Mammary epithelial cell (primary cell): ENCODE measurements at regions of chr17 and their contacts with region 1.

Region 1: GRCh38 chr17:31802502-31802901 is 56.5 kb downstream of the COPRS start:
- DNase-seq: no peak
- H3K4me3 ChIP-seq: no peak overlapping the region
- H3K27ac ChIP-seq: no peak overlapping the region
- H3K4me1 ChIP-seq: no peaks in the 10 kb centered on the region
- H3K27me3 ChIP-seq: no peaks in the 10 kb centered on the region
- CTCF ChIP-seq: no peak

Region 2: GRCh38 chr17:31696184-31696602 is 106.3 kb before region 1 on chr17:
- CTCF ChIA-PET with region 1: no interaction called
- dilution Hi-C with region 1: loop called (anchors 5 kb)
- in situ Hi-C with region 1: no loop called
- intact Hi-C with region 1: no loop called
- DNase-seq: no peak
- H3K4me3 ChIP-seq: no peak overlapping the region
- H3K27ac ChIP-seq: no peak overlapping the region
- H3K4me1 ChIP-seq: peaks cover 5% of the 10 kb centered on the region
- H3K27me3 ChIP-seq: no peaks in the 10 kb centered on the region
- CTCF ChIP-seq: no peak

Region 3: GRCh38 chr17:31754239-31754945 is 48.1 kb before region 1 on chr17:
- CTCF ChIA-PET with region 1: no interaction called
- dilution Hi-C with region 1: loop called (anchors 5 kb)
- in situ Hi-C with region 1: no loop called
- intact Hi-C with region 1: no loop called
- DNase-seq: peak; percentile 79
- H3K4me3 ChIP-seq: no peak overlapping the region
- H3K27ac ChIP-seq: no peak overlapping the region
- H3K4me1 ChIP-seq: peaks cover 4% of the 10 kb centered on the region
- H3K27me3 ChIP-seq: no peaks in the 10 kb centered on the region
- CTCF ChIP-seq: no peak

Region 4: DNA sequence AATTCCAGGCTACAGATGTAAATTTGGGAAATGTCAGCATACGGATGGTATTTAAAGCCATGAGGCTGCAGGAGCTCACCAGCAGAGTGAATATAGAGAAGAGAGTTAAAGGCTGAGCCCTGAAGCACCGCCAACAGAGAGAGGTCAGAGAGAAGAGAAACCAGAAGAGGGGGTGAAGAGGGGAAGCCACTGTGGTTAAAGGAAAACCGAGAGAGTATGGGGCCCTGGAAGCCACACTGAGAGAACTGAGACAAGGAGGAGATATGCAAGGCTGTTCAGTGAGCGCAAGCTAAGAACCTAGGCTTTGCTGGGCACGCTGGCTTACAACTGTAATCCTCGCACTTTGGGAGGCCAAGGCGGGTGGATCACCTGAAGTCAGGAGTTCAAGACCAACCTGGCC is 31.9 kb after region 1 on chr17:
- CTCF ChIA-PET with region 1: no interaction called
- dilution Hi-C with region 1: no loop called
- in situ Hi-C with region 1: no loop called
- intact Hi-C with region 1: no loop called
- DNase-seq: no peak
- H3K4me3 ChIP-seq: no peak overlapping the region
- H3K27ac ChIP-seq: no peak overlapping the region
- H3K4me1 ChIP-seq: no peaks in the 10 kb centered on the region
- H3K27me3 ChIP-seq: no peaks in the 10 kb centered on the region
- CTCF ChIP-seq: no peak